CD8-positive, alpha-beta T cell (primary cell): ENCODE measurements at regions of chr7 and their contacts with region 1.

Region 1: DNA sequence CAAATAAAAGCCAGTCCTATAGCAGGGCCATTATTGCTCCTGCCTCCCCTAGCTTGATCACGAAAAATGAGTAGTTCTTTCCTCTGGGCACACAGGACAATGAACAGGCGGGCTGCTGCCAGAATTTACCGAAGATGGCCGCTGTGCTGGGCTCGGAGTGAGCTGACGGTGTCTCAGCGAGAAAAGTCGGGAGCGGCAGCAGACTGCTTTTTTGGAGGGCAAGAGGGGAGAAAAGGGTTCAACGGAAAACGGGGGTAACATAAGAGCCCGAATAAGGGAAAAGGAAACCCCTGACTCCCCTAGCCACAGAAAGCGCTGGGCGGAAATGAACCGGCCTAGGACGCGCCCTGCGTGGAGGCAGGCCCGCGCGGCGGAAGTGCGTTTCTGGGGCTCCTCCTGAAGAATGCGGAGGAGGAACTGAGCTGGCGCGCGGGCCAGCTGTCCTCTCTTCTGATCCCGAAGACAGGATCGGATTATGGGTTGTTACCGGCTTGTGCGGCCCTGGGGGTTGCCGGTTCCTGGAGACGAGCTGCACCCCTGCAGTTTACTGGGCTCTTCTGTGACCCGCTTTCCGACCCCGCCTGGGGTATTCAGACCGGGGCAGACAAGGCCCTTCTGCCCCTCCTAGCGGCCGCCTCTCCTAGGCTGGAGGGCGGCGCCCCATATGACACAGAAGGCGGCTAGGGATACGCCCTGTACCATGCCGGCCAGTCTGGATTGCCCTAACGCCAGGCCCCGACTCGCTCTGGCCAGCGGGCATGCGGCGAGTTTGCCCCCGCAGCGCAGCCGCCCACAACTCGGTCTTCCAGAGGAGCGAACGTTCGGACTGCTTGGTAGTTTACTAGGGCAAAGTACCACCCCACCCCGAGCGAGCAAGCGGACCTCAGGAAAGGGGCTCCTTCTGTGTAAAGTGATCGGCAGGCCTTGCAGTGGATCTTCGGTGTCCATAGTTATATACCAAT is 30.1 kb upstream of the KMT2E start:
- DNase-seq: peak; percentile 64 to 91 (median 85)
- ATAC-seq: peak; percentile 83
- H3K4me3 ChIP-seq: peak overlapping the region; percentile 67 to 85
- H3K4me3 Mint-ChIP-seq: peak overlapping the region; percentile 100
- H3K27ac ChIP-seq: peak overlapping the region; percentile 95
- H3K27ac Mint-ChIP-seq: peak overlapping the region; percentile 100
- H3K4me1 ChIP-seq: peaks cover 42% of the 10 kb centered on the region
- H3K4me1 Mint-ChIP-seq: peaks cover 55% of the 10 kb centered on the region
- H3K27me3 ChIP-seq: no peaks in the 10 kb centered on the region
- H3K27me3 Mint-ChIP-seq: no peaks in the 10 kb centered on the region
- CTCF ChIP-seq: peak; percentile 51

Region 2: DNA sequence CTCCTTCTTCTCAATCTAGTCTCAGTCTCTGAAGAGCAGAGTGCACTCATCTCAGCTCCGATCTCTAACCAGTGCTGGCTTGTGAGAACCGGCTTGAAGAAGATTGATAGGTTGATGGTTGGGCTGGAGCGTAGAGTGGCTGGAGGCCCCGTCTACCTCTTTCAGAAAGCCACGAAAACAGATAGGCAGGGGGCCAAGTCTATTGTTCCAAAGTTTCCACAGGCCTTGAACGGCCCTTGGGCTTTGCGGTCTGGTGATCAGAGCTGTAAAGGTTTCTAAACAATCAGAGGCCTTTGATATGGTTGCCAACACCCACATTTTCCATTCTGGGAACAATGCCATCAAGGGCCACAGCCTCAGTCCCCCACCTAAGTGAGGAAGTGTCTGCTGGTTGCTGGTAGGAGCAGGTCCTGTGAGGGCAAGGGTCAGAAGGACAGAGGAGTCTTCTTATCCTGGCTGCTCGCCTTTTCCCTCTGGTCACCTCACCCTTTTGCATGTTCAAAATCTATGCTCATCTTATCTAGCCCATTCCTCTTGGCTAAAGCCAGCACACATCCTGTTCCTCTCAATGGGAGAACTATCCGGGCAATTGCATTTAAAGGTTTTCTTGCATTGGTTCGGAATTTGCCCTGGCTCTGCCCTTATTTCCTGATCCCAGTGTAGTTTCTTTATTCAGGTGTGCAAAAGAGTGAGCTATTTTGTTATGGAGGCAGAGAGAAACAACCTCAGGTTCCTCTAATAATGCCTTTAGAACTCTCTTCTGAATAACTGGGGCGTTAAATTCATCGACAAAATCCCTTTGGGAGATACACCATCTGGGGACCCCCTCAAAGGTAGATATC is 40.1 kb before region 1 on chr7:
- CTCF ChIA-PET with region 1: interaction called, 13 read pairs
- POLR2A ChIA-PET with region 1: interaction called, 6 read pairs
- intact Hi-C with region 1: loop called (anchors 1 to 2 kb)
- DNase-seq: peak; percentile 40 to 86 (median 69)
- ATAC-seq: peak; percentile 24
- H3K4me3 ChIP-seq: peak overlapping the region; percentile 10 to 18
- H3K4me3 Mint-ChIP-seq: peak overlapping the region; percentile 83
- H3K27ac ChIP-seq: peak overlapping the region; percentile 98
- H3K27ac Mint-ChIP-seq: peak overlapping the region; percentile 100
- H3K4me1 ChIP-seq: peaks cover 52% of the 10 kb centered on the region
- H3K4me1 Mint-ChIP-seq: peaks cover 64% of the 10 kb centered on the region
- H3K27me3 ChIP-seq: no peaks in the 10 kb centered on the region
- H3K27me3 Mint-ChIP-seq: no peaks in the 10 kb centered on the region
- CTCF ChIP-seq: no peak

Region 3: DNA sequence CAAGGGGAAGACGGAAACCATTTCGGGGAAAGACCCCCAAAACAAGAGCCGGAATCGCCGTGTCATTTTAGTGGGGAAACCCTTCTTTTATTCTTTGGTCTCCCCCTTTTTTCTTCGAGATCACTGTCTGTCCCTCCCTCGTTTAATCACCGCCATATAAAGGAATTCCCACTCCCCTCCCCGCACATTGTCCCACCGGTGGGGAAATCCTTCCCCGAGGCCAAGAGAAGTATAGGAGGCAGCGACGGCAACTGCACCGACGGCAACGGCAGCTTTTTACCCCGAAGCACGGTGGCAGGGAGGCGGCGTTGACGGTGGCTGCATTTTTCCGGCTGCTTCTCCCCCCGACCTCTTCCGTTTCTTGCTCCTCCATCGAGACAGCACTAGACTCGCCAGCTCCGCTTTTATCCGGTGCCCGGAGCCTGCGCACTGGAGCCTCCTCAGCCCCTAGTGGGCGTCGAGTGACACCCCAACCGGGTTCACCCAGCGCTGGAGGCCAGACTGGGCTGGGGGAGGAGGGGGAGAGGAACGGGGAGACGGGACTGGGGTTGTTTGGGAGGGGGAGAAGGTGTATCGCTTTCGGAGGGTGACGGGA is 29.5 kb after region 1 on chr7:
- CTCF ChIA-PET with region 1: interaction called, 97 read pairs
- POLR2A ChIA-PET with region 1: interaction called, 194 read pairs
- intact Hi-C with region 1: loop called (anchors 1 kb)
- DNase-seq: peak; percentile 91 to 97 (median 94)
- ATAC-seq: peak; percentile 56
- H3K4me3 ChIP-seq: peak overlapping the region; percentile 97 to 99
- H3K4me3 Mint-ChIP-seq: peak overlapping the region; percentile 99
- H3K27ac ChIP-seq: peak overlapping the region; percentile 99
- H3K27ac Mint-ChIP-seq: peak overlapping the region; percentile 100
- H3K4me1 ChIP-seq: peaks cover 42% of the 10 kb centered on the region
- H3K4me1 Mint-ChIP-seq: peaks cover 46% of the 10 kb centered on the region
- H3K27me3 ChIP-seq: no peaks in the 10 kb centered on the region
- H3K27me3 Mint-ChIP-seq: no peaks in the 10 kb centered on the region
- CTCF ChIP-seq: peak; percentile 52

Region 4: GRCh38 chr7:105060437-105060836 is 76.6 kb after region 1 on chr7:
- CTCF ChIA-PET with region 1: interaction called, 11 read pairs
- POLR2A ChIA-PET with region 1: interaction called, 6 read pairs
- intact Hi-C with region 1: no loop called
- DNase-seq: no peak
- ATAC-seq: no peak
- H3K4me3 ChIP-seq: no peak overlapping the region
- H3K4me3 Mint-ChIP-seq: no peak overlapping the region
- H3K27ac ChIP-seq: no peak overlapping the region
- H3K27ac Mint-ChIP-seq: peak overlapping the region; percentile 58
- H3K4me1 ChIP-seq: peaks cover 40% of the 10 kb centered on the region
- H3K4me1 Mint-ChIP-seq: peaks cover 75% of the 10 kb centered on the region
- H3K27me3 ChIP-seq: no peaks in the 10 kb centered on the region
- H3K27me3 Mint-ChIP-seq: no peaks in the 10 kb centered on the region
- CTCF ChIP-seq: no peak

Region 5: GRCh38 chr7:105149827-105150226 is 166.0 kb after region 1 on chr7:
- CTCF ChIA-PET with region 1: no interaction called
- POLR2A ChIA-PET with region 1: no interaction called
- intact Hi-C with region 1: no loop called
- DNase-seq: no peak
- ATAC-seq: no peak
- H3K4me3 ChIP-seq: no peak overlapping the region
- H3K4me3 Mint-ChIP-seq: no peak overlapping the region
- H3K27ac ChIP-seq: no peak overlapping the region
- H3K27ac Mint-ChIP-seq: no peak overlapping the region
- H3K4me1 ChIP-seq: no peaks in the 10 kb centered on the region
- H3K4me1 Mint-ChIP-seq: peaks cover 2% of the 10 kb centered on the region
- H3K27me3 ChIP-seq: no peaks in the 10 kb centered on the region
- H3K27me3 Mint-ChIP-seq: no peaks in the 10 kb centered on the region
- CTCF ChIP-seq: no peak

Region 6: DNA sequence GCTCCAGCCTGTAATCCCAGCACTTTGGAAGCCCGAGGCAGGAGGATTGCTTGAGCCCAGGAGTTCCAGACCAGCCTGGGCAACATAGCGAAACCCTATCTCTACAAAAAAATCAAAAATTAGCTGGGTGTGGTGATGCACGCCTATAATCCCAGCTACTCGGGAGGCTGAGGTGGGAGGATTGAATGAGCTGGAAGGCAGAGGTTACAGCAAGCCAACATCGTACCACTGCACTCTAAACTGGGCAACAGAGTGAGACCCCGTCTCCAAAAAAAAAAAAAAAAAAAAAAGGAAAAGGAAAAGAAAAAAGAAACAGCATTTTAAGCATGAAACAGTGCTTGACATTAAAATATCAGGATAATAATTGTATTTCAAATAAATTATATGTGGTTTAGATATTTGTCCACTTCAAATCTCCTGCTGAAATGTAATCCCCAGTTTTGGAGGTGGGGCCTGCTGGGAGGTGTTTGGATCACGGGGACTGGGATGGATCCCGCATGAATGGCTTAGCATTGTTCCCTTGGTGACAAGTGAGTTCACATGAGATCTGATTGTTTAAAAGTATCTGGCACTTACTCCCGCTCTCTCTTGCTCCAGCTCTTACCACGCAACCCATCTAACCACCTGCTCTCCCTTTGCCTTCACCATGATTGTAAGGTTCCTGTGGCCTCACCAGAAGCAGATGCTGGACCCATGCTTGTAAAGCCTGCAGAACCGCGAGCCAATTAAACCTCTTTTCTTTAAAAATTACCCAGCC is 301.4 kb after region 1 on chr7:
- CTCF ChIA-PET with region 1: no interaction called
- POLR2A ChIA-PET with region 1: no interaction called
- intact Hi-C with region 1: loop called in 1 of 2 experiments (anchors 5 kb)
- DNase-seq: no peak
- ATAC-seq: no peak
- H3K4me3 ChIP-seq: no peak overlapping the region
- H3K4me3 Mint-ChIP-seq: no peak overlapping the region
- H3K27ac ChIP-seq: no peak overlapping the region
- H3K27ac Mint-ChIP-seq: no peak overlapping the region
- H3K4me1 ChIP-seq: no peaks in the 10 kb centered on the region
- H3K4me1 Mint-ChIP-seq: peaks cover 34% of the 10 kb centered on the region
- H3K27me3 ChIP-seq: no peaks in the 10 kb centered on the region
- H3K27me3 Mint-ChIP-seq: no peaks in the 10 kb centered on the region
- CTCF ChIP-seq: no peak

Region 7: DNA sequence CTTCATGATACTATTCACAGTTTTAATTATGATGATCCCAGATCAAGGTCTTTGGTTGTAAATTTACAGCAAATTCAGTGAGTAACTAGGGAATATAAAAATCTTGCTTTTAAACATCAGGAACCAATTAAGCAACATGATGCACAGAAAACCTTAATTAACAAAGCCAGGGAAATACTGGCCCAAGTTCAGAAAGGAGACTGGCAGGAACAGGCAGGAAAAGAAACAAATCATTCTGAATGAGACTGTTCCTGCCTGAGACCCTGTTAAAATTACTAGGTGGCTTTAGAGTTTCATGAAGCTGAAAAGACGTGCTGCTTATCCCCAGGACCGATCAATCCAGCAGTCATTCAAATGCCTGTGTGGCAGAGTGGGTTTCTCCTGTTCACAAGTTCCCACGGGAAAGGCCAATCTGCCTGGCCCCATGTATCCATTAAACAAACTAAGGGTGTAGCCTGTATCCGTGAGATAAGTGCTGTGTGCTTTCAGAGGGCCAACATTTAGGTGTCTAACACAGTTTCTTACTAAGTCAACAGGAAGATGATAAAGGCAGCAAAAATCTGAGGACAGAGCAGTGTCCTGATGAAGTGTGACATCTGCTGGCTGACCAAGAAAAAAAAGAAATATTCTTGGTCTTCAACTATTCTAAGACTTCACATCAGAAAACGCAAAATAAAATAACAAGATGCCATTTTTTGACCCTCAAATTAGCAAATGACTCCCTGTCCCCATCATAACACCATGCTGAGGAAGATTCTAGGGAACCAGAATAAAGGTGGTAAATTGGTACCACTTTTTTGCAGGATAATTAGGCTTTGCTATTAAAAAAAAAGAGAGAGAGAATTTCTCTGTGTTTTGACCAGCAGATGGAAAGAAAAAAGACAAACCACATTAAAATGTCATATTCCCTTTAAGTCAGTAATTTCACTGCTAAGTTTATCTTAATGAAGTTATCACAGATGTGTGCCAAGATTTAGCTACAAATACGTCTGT is 504.0 kb after region 1 on chr7:
- CTCF ChIA-PET with region 1: no interaction called
- POLR2A ChIA-PET with region 1: no interaction called
- intact Hi-C with region 1: loop called in 1 of 2 experiments (anchors 5 kb)
- DNase-seq: peak in 3 of 9 experiments; percentile 39 to 53 (median 50)
- ATAC-seq: no peak
- H3K4me3 ChIP-seq: no peak overlapping the region
- H3K4me3 Mint-ChIP-seq: no peak overlapping the region
- H3K27ac ChIP-seq: no peak overlapping the region
- H3K27ac Mint-ChIP-seq: no peak overlapping the region
- H3K4me1 ChIP-seq: no peaks in the 10 kb centered on the region
- H3K4me1 Mint-ChIP-seq: peaks cover 4% of the 10 kb centered on the region
- H3K27me3 ChIP-seq: no peaks in the 10 kb centered on the region
- H3K27me3 Mint-ChIP-seq: no peaks in the 10 kb centered on the region
- CTCF ChIP-seq: peak; percentile 22